ENCODE measurements at regions of chr22 and their contacts with region 1.

Region 1: DNA sequence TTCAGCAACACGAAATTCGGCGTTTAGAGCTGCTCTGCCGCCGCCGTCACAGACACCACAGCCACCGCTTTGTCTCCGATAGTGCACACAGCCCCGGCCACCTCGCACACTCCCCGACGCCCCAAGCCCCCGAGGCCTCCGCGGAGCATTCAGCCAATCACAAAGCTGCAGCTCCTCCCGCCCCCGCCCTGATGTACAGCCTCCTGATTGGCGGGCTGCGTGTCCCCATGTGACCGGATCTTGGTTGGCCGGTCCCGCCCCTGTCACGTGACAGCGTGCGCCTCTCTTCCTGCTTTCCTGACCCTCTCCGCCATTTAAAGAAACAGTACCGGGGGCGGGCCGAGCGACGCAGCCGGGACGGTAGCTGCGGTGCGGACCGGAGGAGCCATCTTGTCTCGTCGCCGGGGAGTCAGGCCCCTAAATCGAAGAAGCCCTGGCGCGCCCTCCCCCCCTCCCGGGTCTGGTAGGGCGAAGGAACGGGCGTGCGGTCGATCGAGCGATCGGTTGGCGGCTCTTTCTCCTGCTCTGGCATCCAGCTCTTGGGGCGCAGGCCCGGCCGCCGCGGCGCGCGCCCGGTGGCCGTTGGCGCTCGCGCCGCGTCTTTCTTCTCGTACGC is at the start of gene TUG1:
- DNase-seq: peak; percentile 99
- ATAC-seq: peak; percentile 91
- H3K4me3 ChIP-seq: peak within 1 kb of the TSS; percentile 74 to 88 (median 82)
- H3K4me3 Mint-ChIP-seq: peak within 1 kb of the TSS; percentile 98
- H3K27ac ChIP-seq: peak within 1 kb of the TSS; percentile 90 to 94
- H3K27ac Mint-ChIP-seq: peak within 1 kb of the TSS; percentile 99
- H3K4me1 ChIP-seq: peaks cover 19 to 20% of the 10 kb centered on the region in 2 donors
- H3K4me1 Mint-ChIP-seq: peaks cover 60% of the 10 kb centered on the region
- H3K27me3 ChIP-seq: no peaks in the 10 kb centered on the region
- H3K27me3 Mint-ChIP-seq: no peaks in the 10 kb centered on the region
- CTCF ChIP-seq: no peak
- total RNA-seq, gene TUG1: 110 and 119 TPM in 2 replicates

Region 2: DNA sequence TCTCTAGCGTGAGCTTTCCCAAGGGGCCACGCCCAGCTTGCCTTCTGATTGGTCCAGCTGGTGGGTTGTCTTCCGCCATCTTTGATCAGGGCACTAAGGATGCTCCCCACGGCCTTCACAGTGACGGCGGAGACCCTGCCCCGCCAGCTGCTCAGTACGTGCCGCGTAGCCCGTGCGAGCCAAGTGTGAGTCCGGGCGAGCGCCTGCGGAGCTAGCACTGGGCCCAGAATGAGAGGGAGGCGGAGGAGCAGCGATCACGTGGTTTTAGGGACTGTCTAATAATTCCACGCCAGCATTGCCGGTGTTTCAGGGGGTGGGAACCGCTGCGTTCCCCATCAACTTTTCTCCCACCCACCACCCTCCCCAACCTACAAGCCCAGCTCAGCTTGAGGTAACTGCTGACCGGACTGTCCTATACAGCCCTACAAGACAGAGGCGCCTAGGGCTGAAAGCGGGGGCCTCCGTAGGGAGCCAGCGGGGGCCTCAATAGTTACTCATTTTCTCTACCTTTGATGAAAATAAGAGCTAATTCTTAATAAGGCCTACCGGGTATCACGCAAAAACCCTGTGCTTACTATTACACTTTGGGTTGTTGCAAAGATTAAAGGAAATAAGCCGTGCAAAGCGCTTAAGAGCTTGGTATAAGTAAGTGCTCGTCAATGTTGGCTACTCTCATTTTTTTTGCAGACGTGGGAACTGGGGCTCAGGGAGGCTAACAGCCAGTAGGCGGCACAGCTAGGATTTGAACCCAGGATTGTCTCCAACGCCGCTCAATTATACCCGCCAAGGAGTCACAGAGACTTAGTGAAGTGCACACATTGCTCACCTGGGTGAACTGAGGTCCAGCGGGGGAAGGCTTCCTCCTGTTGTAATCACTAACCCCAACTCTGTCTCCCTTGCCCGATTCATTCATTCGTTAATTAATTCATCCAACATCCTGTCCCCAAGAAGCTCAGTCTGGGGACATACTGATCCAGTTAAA is 544.8 kb before region 1 on chr22:
- CTCF ChIA-PET with region 1: no interaction called
- POLR2A ChIA-PET with region 1: no interaction called
- intact Hi-C with region 1: loop called (anchors 2 kb)
- DNase-seq: peak; percentile 99
- ATAC-seq: peak; percentile 91
- H3K4me3 ChIP-seq: peak overlapping the region; percentile 54 to 84 (median 76)
- H3K4me3 Mint-ChIP-seq: peak overlapping the region; percentile 99
- H3K27ac ChIP-seq: peak overlapping the region; percentile 78 to 89
- H3K27ac Mint-ChIP-seq: peak overlapping the region; percentile 100
- H3K4me1 ChIP-seq: peaks cover 22 to 40% of the 10 kb centered on the region in 2 donors
- H3K4me1 Mint-ChIP-seq: peaks cover 48% of the 10 kb centered on the region
- H3K27me3 ChIP-seq: no peaks in the 10 kb centered on the region
- H3K27me3 Mint-ChIP-seq: no peaks in the 10 kb centered on the region
- CTCF ChIP-seq: no peak

Region 3: DNA sequence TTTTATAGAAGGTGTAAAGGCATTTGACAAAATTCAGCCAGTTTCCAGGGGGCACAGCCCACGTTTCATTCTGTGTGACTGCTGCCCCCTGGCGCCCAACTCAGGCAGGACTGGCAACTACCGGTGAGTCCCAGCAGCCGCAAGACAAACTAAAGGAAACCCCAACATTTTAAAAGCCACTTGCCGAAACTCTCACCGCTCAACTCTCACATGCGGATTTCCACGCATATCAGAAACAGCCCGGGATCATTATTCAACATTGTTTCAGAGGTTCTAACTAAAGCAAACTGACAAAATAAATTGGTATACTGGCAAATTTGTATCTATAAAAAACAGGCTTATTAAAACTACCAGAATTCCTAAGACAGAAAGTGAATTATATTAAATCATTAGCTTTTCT is 48.6 kb before region 1 on chr22:
- CTCF ChIA-PET with region 1: interaction called, 17 read pairs
- POLR2A ChIA-PET with region 1: no interaction called
- intact Hi-C with region 1: loop called (anchors 1 kb)
- DNase-seq: peak; percentile 83
- ATAC-seq: peak; percentile 71
- H3K4me3 ChIP-seq: peak overlapping the region in 2 of 5 experiments; percentile 21 to 72
- H3K4me3 Mint-ChIP-seq: peak overlapping the region; percentile 33
- H3K27ac ChIP-seq: no peak overlapping the region
- H3K27ac Mint-ChIP-seq: no peak overlapping the region
- H3K4me1 ChIP-seq: peaks cover 9 to 14% of the 10 kb centered on the region in 2 donors
- H3K4me1 Mint-ChIP-seq: peaks cover 12% of the 10 kb centered on the region
- H3K27me3 ChIP-seq: peaks cover 0 to 6% (median under 1%) of the 10 kb centered on the region in 4 experiments
- H3K27me3 Mint-ChIP-seq: peaks cover 3% of the 10 kb centered on the region
- CTCF ChIP-seq: peak; percentile 99

Region 4: GRCh38 chr22:31107178-31107893 is 138.3 kb after region 1 on chr22 and contains the start of gene SELENOM:
- CTCF ChIA-PET with region 1: interaction called, 4 read pairs
- POLR2A ChIA-PET with region 1: no interaction called
- intact Hi-C with region 1: loop called (anchors 1 kb)
- DNase-seq: peak; percentile 90
- ATAC-seq: peak; percentile 97
- H3K4me3 ChIP-seq: peak within 1 kb of the TSS; percentile 42 to 91 (median 72)
- H3K4me3 Mint-ChIP-seq: peak within 1 kb of the TSS; percentile 96
- H3K27ac ChIP-seq: peak within 1 kb of the TSS; percentile 37 to 57
- H3K27ac Mint-ChIP-seq: peak within 1 kb of the TSS; percentile 86
- H3K4me1 ChIP-seq: peaks cover 16 to 17% of the 10 kb centered on the region in 2 donors
- H3K4me1 Mint-ChIP-seq: peaks cover 22% of the 10 kb centered on the region
- H3K27me3 ChIP-seq: no peaks in the 10 kb centered on the region
- H3K27me3 Mint-ChIP-seq: no peaks in the 10 kb centered on the region
- CTCF ChIP-seq: peak; percentile 77
- total RNA-seq, gene SELENOM: 18.4 and 23.6 TPM in 2 replicates

Region 5: DNA sequence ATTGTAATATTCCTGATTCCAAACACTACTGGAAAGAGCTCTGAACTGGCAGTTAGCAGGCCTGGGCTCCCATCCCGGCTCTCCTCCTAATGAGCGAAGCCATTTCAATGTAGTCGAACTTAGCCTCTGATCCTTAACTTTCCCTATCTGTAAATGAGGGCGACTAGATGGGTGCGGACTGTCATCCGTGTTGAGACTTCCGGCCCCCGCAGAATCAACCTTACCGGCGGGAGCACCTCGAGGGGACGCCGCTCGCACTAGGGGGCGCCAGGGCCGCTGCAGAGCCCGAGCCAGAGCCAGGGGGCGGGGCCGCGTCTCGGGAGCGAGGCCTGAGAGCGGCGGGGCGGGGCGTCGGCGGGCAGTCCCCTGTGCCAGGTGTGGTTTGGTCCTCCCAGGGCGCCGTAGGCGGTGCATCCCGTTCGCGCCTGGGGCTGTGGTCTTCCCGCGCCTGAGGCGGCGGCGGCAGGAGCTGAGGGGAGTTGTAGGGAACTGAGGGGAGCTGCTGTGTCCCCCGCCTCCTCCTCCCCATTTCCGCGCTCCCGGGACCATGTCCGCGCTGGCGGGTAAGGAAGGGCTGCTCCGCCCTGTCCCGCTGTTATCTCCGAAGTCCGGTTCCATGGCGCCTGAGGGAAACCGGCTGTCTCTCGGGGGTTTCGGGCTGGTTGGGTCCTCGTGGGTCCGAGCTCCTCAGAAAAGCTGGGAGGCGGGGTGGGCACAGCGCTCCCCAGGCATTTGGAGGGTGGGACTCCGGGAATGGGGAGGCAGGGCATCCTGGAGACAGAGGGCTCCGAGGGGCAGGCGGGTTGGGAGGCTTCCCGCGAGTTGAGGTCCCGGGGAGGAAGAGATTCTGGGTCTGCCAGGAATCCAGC is 243.1 kb after region 1 on chr22 and contains the start of gene LIMK2:
- CTCF ChIA-PET with region 1: no interaction called
- POLR2A ChIA-PET with region 1: no interaction called
- intact Hi-C with region 1: loop called (anchors 2 kb)
- DNase-seq: peak; percentile 96
- ATAC-seq: peak; percentile 100
- H3K4me3 ChIP-seq: peak within 1 kb of the TSS; percentile 76 to 97 (median 80)
- H3K4me3 Mint-ChIP-seq: peak within 1 kb of the TSS; percentile 89
- H3K27ac ChIP-seq: peak within 1 kb of the TSS; percentile 57 to 81
- H3K27ac Mint-ChIP-seq: peak within 1 kb of the TSS; percentile 89
- H3K4me1 ChIP-seq: peaks cover 23 to 29% of the 10 kb centered on the region in 2 donors
- H3K4me1 Mint-ChIP-seq: peaks cover 36% of the 10 kb centered on the region
- H3K27me3 ChIP-seq: no peaks in the 10 kb centered on the region
- H3K27me3 Mint-ChIP-seq: no peaks in the 10 kb centered on the region
- CTCF ChIP-seq: peak; percentile 89
- total RNA-seq, gene LIMK2: 16.3 and 20.2 TPM in 2 replicates

Region 6: DNA sequence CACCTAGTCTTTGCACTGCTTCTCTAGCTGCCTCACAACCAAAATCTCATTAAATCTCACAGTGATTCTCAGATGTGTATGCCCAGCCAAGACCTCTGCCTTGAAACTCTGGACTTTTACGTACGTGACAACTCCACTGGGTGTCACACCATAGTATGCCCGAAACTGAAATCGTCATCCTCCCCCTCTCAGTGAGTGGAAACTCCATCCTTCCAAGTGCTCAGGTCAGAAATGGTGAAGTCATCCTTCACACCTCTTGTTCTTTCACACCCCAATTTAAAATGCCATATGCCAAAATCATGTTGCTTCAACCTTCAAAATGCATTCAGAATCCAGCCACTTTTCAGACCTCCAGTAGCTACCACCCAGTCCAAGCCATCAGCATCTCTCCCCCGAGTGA is 569.8 kb after region 1 on chr22:
- CTCF ChIA-PET with region 1: no interaction called
- POLR2A ChIA-PET with region 1: no interaction called
- intact Hi-C with region 1: no loop called
- DNase-seq: no peak
- ATAC-seq: no peak
- H3K4me3 ChIP-seq: no peak overlapping the region
- H3K4me3 Mint-ChIP-seq: no peak overlapping the region
- H3K27ac ChIP-seq: no peak overlapping the region
- H3K27ac Mint-ChIP-seq: peak overlapping the region; percentile 12
- H3K4me1 ChIP-seq: no peaks in the 10 kb centered on the region
- H3K4me1 Mint-ChIP-seq: no peaks in the 10 kb centered on the region
- H3K27me3 ChIP-seq: no peaks in the 10 kb centered on the region
- H3K27me3 Mint-ChIP-seq: no peaks in the 10 kb centered on the region
- CTCF ChIP-seq: no peak

Region 7: GRCh38 chr22:31630331-31631329 is 661.6 kb after region 1 on chr22:
- CTCF ChIA-PET with region 1: no interaction called
- POLR2A ChIA-PET with region 1: no interaction called
- intact Hi-C with region 1: loop called (anchors 10 kb)
- DNase-seq: peak; percentile 98
- ATAC-seq: peak; percentile 82
- H3K4me3 ChIP-seq: peak overlapping the region in 4 of 5 experiments; percentile 60 to 79 (median 66)
- H3K4me3 Mint-ChIP-seq: peak overlapping the region; percentile 92
- H3K27ac ChIP-seq: peak overlapping the region; percentile 95 to 98
- H3K27ac Mint-ChIP-seq: peak overlapping the region; percentile 96
- H3K4me1 ChIP-seq: peaks cover 23 to 58% of the 10 kb centered on the region in 2 donors
- H3K4me1 Mint-ChIP-seq: peaks cover 65% of the 10 kb centered on the region
- H3K27me3 ChIP-seq: no peaks in the 10 kb centered on the region
- H3K27me3 Mint-ChIP-seq: no peaks in the 10 kb centered on the region
- CTCF ChIP-seq: no peak

Region 8: DNA sequence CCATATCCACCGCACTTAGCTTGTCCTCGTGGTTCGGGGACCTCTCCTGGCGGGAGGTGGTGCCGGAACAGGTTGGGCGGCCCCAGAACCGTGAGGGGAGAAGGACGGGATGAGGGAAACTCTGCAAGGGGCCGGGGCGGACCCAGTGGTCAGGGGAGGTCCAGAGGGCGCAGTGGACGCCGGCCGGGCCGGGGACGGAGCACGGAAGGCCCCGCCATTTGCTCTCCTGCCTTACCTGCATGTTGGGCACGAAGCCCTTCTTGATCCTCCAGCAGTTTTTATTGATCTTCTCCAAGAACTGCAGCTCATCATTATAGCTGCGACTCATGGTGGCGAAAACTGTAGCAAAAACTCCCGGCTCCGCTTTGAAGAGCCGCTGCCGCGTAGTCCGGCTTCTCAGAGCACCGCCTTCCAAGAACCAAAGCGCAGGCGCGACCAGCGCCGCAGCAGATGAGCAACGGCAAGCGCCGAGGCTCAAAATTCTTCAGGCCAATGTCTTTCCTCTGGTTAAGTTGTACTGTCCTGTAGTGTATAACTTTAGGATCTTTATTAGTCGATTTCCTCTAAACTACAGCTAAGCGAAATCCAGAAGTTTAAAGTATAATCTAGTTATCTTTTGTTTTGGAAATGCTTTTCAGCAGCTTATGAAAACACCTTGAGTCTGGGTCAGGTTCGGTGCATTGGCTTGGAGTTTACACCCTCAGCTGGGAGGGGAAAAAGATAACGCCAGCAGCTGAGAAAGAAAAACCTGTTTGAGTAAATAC is 1443.0 kb after region 1 on chr22 and contains the start of gene RTCB:
- CTCF ChIA-PET with region 1: no interaction called
- POLR2A ChIA-PET with region 1: interaction called, 4 read pairs
- intact Hi-C with region 1: loop called (anchors 10 kb)
- DNase-seq: peak; percentile 94
- ATAC-seq: peak; percentile 76
- H3K4me3 ChIP-seq: peak within 1 kb of the TSS; percentile 94 to 99 (median 99)
- H3K4me3 Mint-ChIP-seq: peak within 1 kb of the TSS; percentile 97
- H3K27ac ChIP-seq: peak within 1 kb of the TSS; percentile 77 to 91
- H3K27ac Mint-ChIP-seq: peak within 1 kb of the TSS; percentile 97
- H3K4me1 ChIP-seq: peaks cover 37 to 39% of the 10 kb centered on the region in 2 donors
- H3K4me1 Mint-ChIP-seq: peaks cover 56% of the 10 kb centered on the region
- H3K27me3 ChIP-seq: peaks cover 0 to 7% (median 2%) of the 10 kb centered on the region in 4 experiments
- H3K27me3 Mint-ChIP-seq: peaks cover 8% of the 10 kb centered on the region
- CTCF ChIP-seq: no peak
- total RNA-seq, gene RTCB: 60.1 and 60.6 TPM in 2 replicates